Dorsolateral prefrontal cortex (tissue), 120 donors: ENCODE measurements at regions of chr18 and their contacts with region 1.

Region 1: DNA sequence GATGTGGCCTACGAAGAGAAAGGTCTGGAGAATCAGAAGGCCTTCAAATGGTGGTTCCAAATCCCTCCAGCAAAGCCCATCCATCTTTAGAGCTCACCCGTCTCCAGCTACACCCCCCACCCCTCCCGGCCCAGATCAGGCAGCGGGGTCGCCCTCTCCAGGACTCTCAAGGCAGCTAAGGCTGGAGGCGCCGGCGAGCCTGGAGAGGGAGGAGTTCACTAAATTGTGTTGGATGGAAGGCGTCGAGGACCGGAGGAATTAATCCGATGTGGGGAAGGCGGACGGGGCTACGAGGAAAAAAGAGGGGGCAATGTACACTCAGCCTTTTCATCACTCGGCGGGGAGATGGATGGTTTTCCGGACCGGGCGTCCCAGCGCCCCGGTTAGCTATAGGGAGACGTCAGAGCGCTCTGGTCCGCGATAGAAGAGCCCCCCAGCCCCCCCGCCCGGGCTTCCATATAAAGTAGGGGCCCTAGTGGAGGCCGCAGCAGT is at the start of gene GRP:
- DNase-seq: no peak
- H3K4me3 ChIP-seq: peak within 1 kb of the TSS; percentile 20 to 70 (median 49)
- H3K27ac ChIP-seq: no peak within 1 kb of the TSS
- H3K27me3 ChIP-seq: peaks cover 0 to 59% (median 22%) of the 10 kb centered on the region in 45 donors
- CTCF ChIP-seq: no peak
- total RNA-seq, gene GRP: 0.53 to 3.8 (median 1.4) TPM in 51 of 120 experiments, not detected in the others

Region 2: GRCh38 chr18:59085797-59086196 is 133.9 kb before region 1 on chr18:
- intact Hi-C with region 1: loop called in 1 of 2 experiments (anchors 10 kb)
- DNase-seq: no peak
- H3K4me3 ChIP-seq: no peak overlapping the region
- H3K27ac ChIP-seq: no peak overlapping the region
- H3K27me3 ChIP-seq: no peaks in the 10 kb centered on the region
- CTCF ChIP-seq: no peak

Region 3: GRCh38 chr18:59606193-59607077 is 386.7 kb after region 1 on chr18:
- intact Hi-C with region 1: no loop called
- DNase-seq: no peak
- H3K4me3 ChIP-seq: no peak overlapping the region
- H3K27ac ChIP-seq: no peak overlapping the region
- H3K27me3 ChIP-seq: no peaks in the 10 kb centered on the region
- CTCF ChIP-seq: no peak